ENCODE measurements at regions of chr4 and their contacts with region 1.

Region 1: GRCh38 chr4:109977854-109978501 is 65.3 kb downstream of the EGF start:
- DNase-seq: no peak
- H3K4me3 ChIP-seq: no peak overlapping the region
- H3K4me3 Mint-ChIP-seq: no peak overlapping the region
- H3K27ac Mint-ChIP-seq: no peak overlapping the region
- H3K4me1 ChIP-seq: peaks cover 20% of the 10 kb centered on the region; the same call in 1 of the 2 replicates
- H3K4me1 Mint-ChIP-seq: peaks cover 13% of the 10 kb centered on the region
- H3K27me3 ChIP-seq: no peaks in the 10 kb centered on the region
- H3K27me3 Mint-ChIP-seq: no peaks in the 10 kb centered on the region
- CTCF ChIP-seq: peak; percentile 48 to 56

Region 2: DNA sequence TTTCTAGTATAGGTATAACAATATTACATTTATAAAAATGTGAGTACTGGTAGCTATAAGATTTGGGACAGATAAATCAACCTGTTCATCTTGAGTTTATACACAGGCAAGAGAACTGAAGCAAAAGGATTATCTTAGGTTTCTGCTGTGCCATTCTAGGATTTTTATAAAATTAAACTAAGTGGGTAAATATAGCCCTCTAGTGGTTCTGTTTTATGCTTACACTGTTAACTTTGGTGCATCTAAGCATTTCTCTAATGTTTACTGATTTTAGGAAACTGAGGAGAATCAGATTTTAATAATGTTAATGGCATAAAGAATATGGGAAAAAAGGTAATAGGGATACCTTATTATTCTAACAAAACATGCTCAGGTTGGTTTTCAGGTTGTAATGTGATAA is 151.3 kb before region 1 on chr4:
- CTCF ChIA-PET with region 1: no interaction called
- POLR2A ChIA-PET with region 1: no interaction called
- intact Hi-C with region 1: loop called (anchors 5 kb)
- DNase-seq: no peak
- H3K4me3 ChIP-seq: no peak overlapping the region
- H3K4me3 Mint-ChIP-seq: no peak overlapping the region
- H3K27ac Mint-ChIP-seq: no peak overlapping the region
- H3K4me1 ChIP-seq: no peaks in the 10 kb centered on the region
- H3K4me1 Mint-ChIP-seq: no peaks in the 10 kb centered on the region
- H3K27me3 ChIP-seq: no peaks in the 10 kb centered on the region
- H3K27me3 Mint-ChIP-seq: no peaks in the 10 kb centered on the region
- CTCF ChIP-seq: peak; percentile 38 to 41